Activated T-helper 1 cell treated with anti-CD3 and anti-CD28 coated beads, Interleukin-12 subunit alpha, Interleukin-12 subunit beta, Interleukin-2, Interleukin-4 antibody, amounts not matched to agents 30 ng/mL and 10 ng/mL and 1 ng/mL, durations not matched to agents 14 hours and 24 hours and 36 hours (primary cell): ENCODE measurements at regions of chr11 and their contacts with region 1.

Region 1: DNA sequence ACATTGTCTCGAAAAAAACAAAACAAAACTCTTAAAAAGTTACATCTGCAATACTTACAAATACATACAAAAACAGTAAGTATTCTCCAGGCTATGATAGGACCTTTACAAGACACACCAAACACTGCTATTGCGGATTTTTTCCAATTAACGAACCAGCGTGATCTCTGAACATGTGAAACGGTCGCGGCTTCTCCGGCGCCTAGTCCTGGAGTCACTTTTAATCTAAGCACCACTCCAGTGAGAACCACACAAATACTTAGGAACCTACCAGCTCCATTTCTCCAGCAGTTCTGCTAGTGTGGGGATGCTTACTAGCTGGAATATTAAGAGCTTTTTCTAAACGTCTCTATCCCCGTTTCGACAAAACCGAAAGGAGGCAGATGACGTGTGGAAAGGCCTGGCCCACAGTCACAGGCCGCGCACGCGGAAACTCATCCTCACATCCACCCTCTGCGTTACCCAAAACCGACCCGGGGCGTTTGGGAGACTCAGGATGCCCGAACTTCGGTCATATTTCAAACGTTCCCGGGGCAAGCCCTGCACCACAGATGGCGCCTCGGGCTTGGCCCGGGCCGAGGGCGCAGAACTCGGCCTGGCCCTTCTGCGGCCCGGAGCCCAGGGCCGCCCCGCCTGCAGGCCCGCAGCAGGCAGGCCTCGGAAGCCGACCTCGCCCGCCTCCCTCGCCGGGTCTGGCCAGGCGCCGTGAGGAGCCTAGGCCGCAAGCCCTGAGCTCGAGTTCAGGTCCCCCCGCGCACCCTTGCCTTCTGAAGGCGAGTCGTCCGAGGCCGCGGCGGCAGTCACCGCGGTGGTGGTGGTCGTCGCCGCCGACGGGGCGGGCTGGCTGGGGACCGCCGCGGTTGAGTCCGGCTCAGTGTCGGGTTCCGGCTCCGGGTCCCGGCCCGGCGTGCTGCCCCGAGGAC is 575 bp downstream of the FNBP4 start:
- DNase-seq: peak; percentile 75
- H3K4me3 Mint-ChIP-seq: peak overlapping the region; percentile 99
- H3K27ac Mint-ChIP-seq: peak overlapping the region; percentile 100
- H3K4me1 Mint-ChIP-seq: peaks cover 28% of the 10 kb centered on the region
- H3K27me3 Mint-ChIP-seq: no peaks in the 10 kb centered on the region

Region 2: GRCh38 chr11:46537537-46538295 is 1228.8 kb before region 1 on chr11:
- intact Hi-C with region 1: no loop called
- DNase-seq: peak; percentile 47
- H3K4me3 Mint-ChIP-seq: no peak overlapping the region
- H3K27ac Mint-ChIP-seq: no peak overlapping the region
- H3K4me1 Mint-ChIP-seq: peaks cover 15% of the 10 kb centered on the region
- H3K27me3 Mint-ChIP-seq: no peaks in the 10 kb centered on the region

Region 3: DNA sequence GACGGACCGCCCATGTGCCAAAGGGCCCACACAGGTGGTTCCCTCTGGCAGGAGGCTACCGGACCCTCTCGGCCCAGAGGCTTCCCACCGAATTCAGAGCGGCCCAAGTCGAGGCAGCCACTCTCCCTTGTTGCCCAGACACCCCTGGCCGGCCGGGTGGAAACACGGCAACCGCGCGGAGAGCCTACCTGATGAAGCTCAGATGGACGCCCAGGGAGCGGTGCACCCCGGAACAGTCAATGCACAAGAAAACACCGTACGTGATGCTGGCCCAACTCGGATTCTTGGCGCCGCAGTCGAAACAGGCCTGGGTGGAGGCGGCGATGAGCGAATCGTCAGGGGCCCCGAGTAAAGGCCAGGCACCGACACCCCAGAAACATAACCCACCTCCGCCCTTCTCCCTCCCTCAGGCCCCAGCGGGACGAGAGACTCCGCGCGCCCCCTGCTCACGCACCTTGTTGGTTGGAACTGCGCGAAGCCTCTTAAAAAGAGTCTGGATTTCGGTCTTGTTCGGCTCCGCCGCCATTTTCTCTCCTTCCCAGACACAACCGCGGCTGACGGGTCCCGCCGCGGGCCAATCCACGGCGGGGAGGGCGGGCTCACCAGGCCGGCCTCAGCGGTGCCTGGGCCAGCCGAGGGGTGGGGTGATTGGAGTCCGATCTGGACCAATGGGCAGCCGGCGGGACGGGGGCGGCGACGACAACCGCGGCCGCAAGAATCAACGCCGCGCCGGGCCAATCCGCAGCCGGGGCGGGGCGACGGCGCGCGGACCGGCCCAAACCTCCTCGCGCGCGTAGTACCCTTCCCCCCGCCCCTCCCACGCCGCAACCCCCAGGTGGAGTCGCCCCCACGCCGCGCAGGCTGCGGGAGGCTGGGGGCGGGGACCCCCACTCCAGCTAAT is 590.0 kb before region 1 on chr11 and contains the start of gene ARFGAP2:
- intact Hi-C with region 1: loop called (anchors 1 kb)
- DNase-seq: peak; percentile 96
- H3K4me3 Mint-ChIP-seq: peak within 1 kb of the TSS; percentile 97
- H3K27ac Mint-ChIP-seq: peak within 1 kb of the TSS; percentile 100
- H3K4me1 Mint-ChIP-seq: peaks cover 36% of the 10 kb centered on the region
- H3K27me3 Mint-ChIP-seq: no peaks in the 10 kb centered on the region
- total RNA-seq, gene ARFGAP2: 111 and 116 TPM in 2 replicates

Region 4: GRCh38 chr11:47514825-47515647 is 251.5 kb before region 1 on chr11:
- intact Hi-C with region 1: loop called (anchors 5 kb)
- DNase-seq: no peak
- H3K4me3 Mint-ChIP-seq: peak overlapping the region; percentile 60
- H3K27ac Mint-ChIP-seq: peak overlapping the region; percentile 93
- H3K4me1 Mint-ChIP-seq: peaks cover 76% of the 10 kb centered on the region
- H3K27me3 Mint-ChIP-seq: no peaks in the 10 kb centered on the region

Region 5: DNA sequence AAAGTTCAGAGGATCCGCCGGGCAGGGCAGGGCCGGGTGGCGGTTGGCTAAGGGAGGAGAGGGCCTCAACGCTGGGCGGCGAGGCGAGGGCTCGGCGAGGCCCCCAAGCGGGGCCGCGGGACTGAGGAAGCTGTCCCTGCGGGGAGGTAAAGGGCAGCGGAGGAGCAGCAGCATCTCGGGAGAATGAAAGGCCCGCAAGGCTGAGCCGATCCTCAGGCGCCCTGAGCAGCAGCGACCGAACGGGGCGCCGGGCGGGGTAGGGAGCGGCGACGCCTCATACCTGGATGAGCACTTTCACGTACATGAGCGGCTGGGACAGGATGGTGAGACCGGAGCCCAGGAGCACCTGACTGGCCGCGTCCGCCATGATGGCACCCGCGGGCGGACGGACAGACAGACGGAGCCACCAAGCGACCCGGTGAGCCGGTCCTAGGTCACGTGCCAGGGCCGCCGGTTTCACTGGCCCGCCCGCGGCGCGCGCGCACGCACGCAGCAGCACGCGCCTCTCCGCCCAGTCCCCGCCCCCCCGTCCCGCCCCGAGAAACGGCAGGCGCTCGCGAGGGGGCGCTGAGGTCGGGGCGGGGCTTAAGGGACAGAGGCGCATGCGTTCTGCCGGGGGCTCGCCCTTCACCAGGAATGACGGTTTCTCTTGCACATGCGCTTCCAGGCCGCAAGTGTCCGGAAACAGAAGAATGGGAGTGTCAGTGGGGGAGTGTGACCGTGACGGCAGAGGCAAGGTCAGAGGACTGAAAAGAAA is 124.3 kb before region 1 on chr11 and contains the start of gene MTCH2:
- intact Hi-C with region 1: loop called (anchors 1 kb)
- DNase-seq: peak; percentile 95
- H3K4me3 Mint-ChIP-seq: peak within 1 kb of the TSS; percentile 96
- H3K27ac Mint-ChIP-seq: peak within 1 kb of the TSS; percentile 97
- H3K4me1 Mint-ChIP-seq: peaks cover 30% of the 10 kb centered on the region
- H3K27me3 Mint-ChIP-seq: no peaks in the 10 kb centered on the region
- total RNA-seq, gene MTCH2: 116 and 118 TPM in 2 replicates

Region 6: GRCh38 chr11:47847892-47848635 is 81.5 kb after region 1 on chr11 and contains the start of gene NUP160:
- intact Hi-C with region 1: loop called (anchors 1 kb)
- DNase-seq: peak; percentile 86
- H3K4me3 Mint-ChIP-seq: peak within 1 kb of the TSS; percentile 98
- H3K27ac Mint-ChIP-seq: peak within 1 kb of the TSS; percentile 100
- H3K4me1 Mint-ChIP-seq: peaks cover 47% of the 10 kb centered on the region
- H3K27me3 Mint-ChIP-seq: no peaks in the 10 kb centered on the region
- total RNA-seq, gene NUP160: 91.9 and 98.6 TPM in 2 replicates

Region 7: DNA sequence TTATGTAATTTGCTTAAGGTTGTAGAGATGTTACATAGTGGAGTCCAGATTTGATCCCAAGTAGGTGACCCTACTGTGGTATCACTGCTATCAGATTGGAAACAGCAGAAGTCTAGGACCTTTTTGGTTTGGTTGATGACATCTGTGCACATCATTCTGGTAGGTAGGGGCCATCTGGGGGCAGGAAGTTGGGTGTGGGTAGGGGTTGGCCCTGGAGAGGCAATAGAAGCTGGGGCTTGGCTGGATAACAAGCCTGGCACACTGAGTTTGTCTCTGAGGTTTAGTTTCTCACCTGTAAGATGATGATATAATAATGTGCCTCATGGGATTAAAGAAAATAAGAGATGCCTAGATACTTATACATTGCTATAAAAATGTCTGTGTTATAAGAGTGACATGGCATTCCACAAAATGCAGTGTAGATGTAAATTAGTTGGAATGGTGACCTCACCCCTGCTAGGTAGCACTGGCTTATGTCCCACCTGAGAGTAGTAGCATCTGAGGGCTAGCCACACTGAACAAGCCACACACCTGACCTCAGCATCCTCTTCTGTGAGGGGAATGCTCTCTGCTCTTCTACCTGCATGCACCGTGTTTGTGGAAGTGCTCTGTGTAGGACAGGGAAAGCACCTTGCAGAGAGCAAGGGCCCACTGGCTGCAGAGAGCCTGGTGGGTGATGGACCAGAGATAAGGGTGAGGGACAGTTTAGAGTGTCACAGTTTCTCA is 250.7 kb after region 1 on chr11:
- intact Hi-C with region 1: no loop called
- DNase-seq: no peak
- H3K4me3 Mint-ChIP-seq: peak overlapping the region; percentile 27
- H3K27ac Mint-ChIP-seq: peak overlapping the region; percentile 89
- H3K4me1 Mint-ChIP-seq: peaks cover 92% of the 10 kb centered on the region
- H3K27me3 Mint-ChIP-seq: no peaks in the 10 kb centered on the region